ENCODE measurements at regions of chr6 and their contacts with region 1.

Region 1: DNA sequence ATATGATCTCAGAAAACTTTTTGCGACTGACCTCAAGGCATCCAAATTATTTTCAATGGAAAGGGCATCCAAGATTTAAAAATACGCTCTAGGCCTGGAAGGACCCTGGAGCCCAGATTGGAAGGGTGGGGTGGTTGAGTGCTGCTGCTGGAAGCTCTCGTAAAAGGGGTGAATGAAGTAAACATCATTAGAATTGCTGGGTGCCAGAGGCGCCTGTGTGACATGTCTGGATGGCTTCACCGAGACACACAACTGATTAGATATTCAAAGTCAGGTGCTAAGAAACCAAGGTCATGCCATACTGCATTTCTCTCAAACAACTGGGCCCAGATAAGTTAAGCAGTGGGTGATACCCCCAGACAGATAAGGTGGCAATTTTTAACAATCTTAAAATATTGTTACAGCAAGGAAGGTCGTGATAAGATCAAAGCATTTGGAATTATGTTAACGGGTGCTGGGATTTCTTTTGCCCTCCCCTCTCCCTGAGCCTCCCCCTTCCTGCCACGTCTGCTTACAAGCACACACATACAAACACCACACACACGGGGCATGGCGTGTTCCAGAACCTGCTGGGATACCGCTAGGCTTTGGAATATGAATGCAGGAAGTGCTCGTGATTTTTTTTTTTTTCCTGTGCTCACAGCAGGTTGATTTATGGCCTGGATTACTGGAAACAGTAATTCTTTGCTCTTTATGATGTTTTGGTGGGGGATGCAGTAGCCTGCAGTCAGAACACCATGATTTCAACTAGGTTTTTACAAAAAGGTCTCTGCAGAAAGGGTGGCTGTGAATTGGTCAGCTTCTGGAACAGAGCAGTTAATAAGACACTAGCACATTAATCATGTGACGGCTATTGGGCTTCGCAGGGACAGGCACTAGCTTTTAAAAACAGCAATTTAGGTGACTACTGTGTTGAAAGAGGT is 551.2 kb downstream of the QKI start:
- DNase-seq: peak in 1 of 2 donors; percentile 67
- ATAC-seq: peak in 3 of 4 donors; percentile 31 to 52 (median 49)
- H3K4me3 ChIP-seq: peak overlapping the region; percentile 15
- H3K27ac ChIP-seq: peak overlapping the region; percentile 95
- H3K4me1 ChIP-seq: peaks cover 48% of the 10 kb centered on the region
- H3K27me3 ChIP-seq: no peaks in the 10 kb centered on the region
- CTCF ChIP-seq: no peak

Region 2: GRCh38 chr6:163338671-163339405 is 626.8 kb before region 1 on chr6:
- intact Hi-C with region 1: loop called in 1 of 2 experiments (anchors 10 kb)
- DNase-seq: peak; percentile 56 to 78
- ATAC-seq: peak; percentile 79 to 83 (median 80)
- H3K4me3 ChIP-seq: peak overlapping the region; percentile 50
- H3K27ac ChIP-seq: peak overlapping the region; percentile 94
- H3K4me1 ChIP-seq: peaks cover 72% of the 10 kb centered on the region
- H3K27me3 ChIP-seq: no peaks in the 10 kb centered on the region
- CTCF ChIP-seq: no peak

Region 3: DNA sequence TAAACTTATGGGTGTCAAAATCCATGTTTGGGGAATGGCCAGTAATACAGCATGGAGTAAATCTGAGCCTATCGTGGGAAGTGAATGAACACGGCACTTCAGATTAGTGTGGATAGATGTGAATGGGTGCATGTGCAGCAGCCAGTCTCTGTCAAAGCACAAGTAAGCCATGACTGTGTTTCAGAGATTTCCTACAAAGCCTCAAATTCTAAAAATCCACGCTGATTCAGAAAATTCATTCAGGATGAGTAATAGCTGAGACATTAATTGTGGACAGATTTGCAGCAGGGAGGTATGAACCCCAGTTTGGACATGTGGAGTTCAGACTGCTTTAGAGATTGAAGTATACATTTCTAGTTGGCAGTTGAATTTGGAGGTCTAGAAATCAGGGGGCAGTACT is 436.1 kb before region 1 on chr6:
- intact Hi-C with region 1: no loop called
- DNase-seq: no peak
- ATAC-seq: peak; percentile 31 to 39 (median 34)
- H3K4me3 ChIP-seq: peak overlapping the region; percentile 26
- H3K27ac ChIP-seq: peak overlapping the region; percentile 81
- H3K4me1 ChIP-seq: peaks cover 97% of the 10 kb centered on the region
- H3K27me3 ChIP-seq: no peaks in the 10 kb centered on the region
- CTCF ChIP-seq: no peak

Region 4: GRCh38 chr6:163915158-163915557 is 50.5 kb before region 1 on chr6:
- intact Hi-C with region 1: no loop called
- DNase-seq: no peak
- ATAC-seq: no peak
- H3K4me3 ChIP-seq: no peak overlapping the region
- H3K27ac ChIP-seq: no peak overlapping the region
- H3K4me1 ChIP-seq: no peaks in the 10 kb centered on the region
- H3K27me3 ChIP-seq: no peaks in the 10 kb centered on the region
- CTCF ChIP-seq: no peak

Region 5: GRCh38 chr6:164097557-164098398 is 132.1 kb after region 1 on chr6:
- intact Hi-C with region 1: loop called in 1 of 2 experiments (anchors 2 kb)
- DNase-seq: peak in 1 of 2 donors; percentile 50
- ATAC-seq: peak; percentile 61 to 74 (median 64)
- H3K4me3 ChIP-seq: no peak overlapping the region
- H3K27ac ChIP-seq: peak overlapping the region; percentile 77
- H3K4me1 ChIP-seq: peaks cover 28% of the 10 kb centered on the region
- H3K27me3 ChIP-seq: no peaks in the 10 kb centered on the region
- CTCF ChIP-seq: peak; percentile 33

Region 6: DNA sequence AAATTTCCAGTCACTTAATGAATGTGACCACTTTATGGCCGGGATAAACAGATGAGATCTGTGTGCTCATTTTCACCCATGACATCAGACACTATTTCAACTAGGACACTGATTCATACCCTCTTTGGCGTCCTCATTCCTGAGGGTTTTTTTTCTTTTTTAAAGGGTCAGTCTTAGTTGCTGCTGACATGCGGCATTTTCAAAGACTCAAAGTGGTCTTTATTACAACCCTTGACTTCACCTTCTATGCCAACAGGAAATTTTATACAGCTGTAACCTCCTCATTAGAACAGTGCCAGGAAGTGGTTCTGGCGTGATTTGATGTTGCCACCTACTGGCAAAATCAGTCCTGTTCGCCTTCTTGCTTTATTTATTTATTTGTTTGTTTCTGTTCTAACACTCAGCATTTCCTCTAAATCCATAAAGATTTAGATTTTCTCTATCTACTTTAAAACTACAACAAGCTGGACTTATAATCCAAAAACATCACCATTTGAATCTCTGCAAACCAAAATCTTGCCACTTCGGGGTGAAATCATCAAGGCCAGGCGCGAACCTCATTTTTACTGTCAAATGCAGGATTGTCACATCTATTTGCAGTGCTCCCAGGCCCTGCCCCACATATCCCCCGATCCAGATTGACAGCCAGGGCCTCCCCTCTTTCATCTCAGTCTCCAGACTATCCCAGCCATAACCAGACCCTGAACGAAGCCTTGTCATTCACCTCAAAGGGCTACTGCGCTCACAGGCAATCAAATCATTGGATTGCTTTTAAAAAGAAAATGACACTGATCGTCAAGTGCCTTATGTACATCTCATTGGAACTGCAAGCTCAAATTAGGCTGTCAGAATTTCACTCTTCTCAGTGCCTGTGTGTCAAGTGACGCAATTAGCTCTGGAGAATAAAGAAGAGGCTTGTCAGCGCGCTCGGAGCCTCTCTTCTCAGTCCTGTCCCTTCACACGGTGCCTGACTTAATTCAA is 1266.2 kb after region 1 on chr6:
- intact Hi-C with region 1: loop called in 1 of 2 experiments (anchors 10 kb)
- DNase-seq: no peak
- ATAC-seq: peak; percentile 92 to 96 (median 94)
- H3K4me3 ChIP-seq: peak overlapping the region; percentile 52
- H3K27ac ChIP-seq: peak overlapping the region; percentile 91
- H3K4me1 ChIP-seq: peaks cover 19% of the 10 kb centered on the region
- H3K27me3 ChIP-seq: no peaks in the 10 kb centered on the region
- CTCF ChIP-seq: peak; percentile 70